AG04449 (cell line): ENCODE measurements at regions of chr1 and their contacts with region 1.

Region 1: GRCh38 chr1:206912445-206913095 is 9.2 kb downstream of the FCMR start:
- DNase-seq: no peak
- H3K4me3 ChIP-seq: no peak overlapping the region
- CTCF ChIP-seq: peak; percentile 73

Region 2: GRCh38 chr1:206663832-206664652 is 248.5 kb before region 1 on chr1:
- CTCF ChIA-PET with region 1: interaction called, 23 read pairs
- POLR2A ChIA-PET with region 1: no interaction called
- DNase-seq: no peak
- H3K4me3 ChIP-seq: no peak overlapping the region; the same call in 1 of the 2 replicates
- CTCF ChIP-seq: peak; percentile 66

Region 3: DNA sequence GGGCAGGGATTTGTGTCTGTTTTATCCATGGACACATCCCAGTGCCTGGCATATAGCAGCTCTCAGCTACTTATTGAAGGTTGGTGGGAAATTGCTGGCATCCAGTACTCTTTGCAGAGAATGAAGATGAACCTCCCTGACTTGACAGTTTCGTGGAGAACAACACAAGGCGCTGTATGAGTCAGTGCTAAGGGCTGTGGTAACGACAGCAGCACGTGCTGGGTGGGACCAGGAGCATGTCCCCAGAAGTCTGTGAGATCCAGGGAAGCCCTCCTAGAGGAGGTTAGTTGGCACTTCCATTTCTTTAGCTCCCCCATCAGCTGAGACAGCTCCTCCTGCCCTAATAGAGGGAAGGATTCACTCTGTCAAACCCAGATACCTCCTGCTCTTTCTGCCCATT is 167.9 kb before region 1 on chr1:
- CTCF ChIA-PET with region 1: interaction called, 53 read pairs
- POLR2A ChIA-PET with region 1: no interaction called
- DNase-seq: no peak
- H3K4me3 ChIP-seq: no peak overlapping the region
- CTCF ChIP-seq: no peak

Region 4: GRCh38 chr1:206814716-206815341 is 97.7 kb before region 1 on chr1:
- CTCF ChIA-PET with region 1: interaction called, 272 read pairs
- POLR2A ChIA-PET with region 1: no interaction called
- DNase-seq: no peak
- H3K4me3 ChIP-seq: no peak overlapping the region
- CTCF ChIP-seq: no peak

Region 5: GRCh38 chr1:206890690-206891089 is 21.9 kb before region 1 on chr1:
- CTCF ChIA-PET with region 1: interaction called, 42 read pairs
- POLR2A ChIA-PET with region 1: no interaction called
- DNase-seq: no peak
- H3K4me3 ChIP-seq: no peak overlapping the region
- CTCF ChIP-seq: no peak

Region 6: GRCh38 chr1:206982216-206982615 is 69.6 kb after region 1 on chr1:
- CTCF ChIA-PET with region 1: interaction called, 35 read pairs
- POLR2A ChIA-PET with region 1: no interaction called
- DNase-seq: no peak
- H3K4me3 ChIP-seq: no peak overlapping the region
- CTCF ChIP-seq: peak; percentile 65